ENCODE measurements at regions of chrX and their contacts with region 1.

Region 1: GRCh38 chrX:6120329-6120728 is 108.3 kb downstream of the NLGN4X start:
- DNase-seq: no peak
- ATAC-seq: no peak
- H3K4me3 ChIP-seq: no peak overlapping the region
- H3K27ac ChIP-seq: no peak overlapping the region
- H3K4me1 ChIP-seq: no peaks in the 10 kb centered on the region
- H3K27me3 ChIP-seq: no peaks in the 10 kb centered on the region
- CTCF ChIP-seq: no peak
- EP300 ChIP-seq: no peak
- POLR2A ChIP-seq: no peak
- RAD21 ChIP-seq: no peak

Region 2: GRCh38 chrX:6067600-6067999 is 52.7 kb before region 1 on chrX:
- CTCF ChIA-PET with region 1: no interaction called
- POLR2A ChIA-PET with region 1: no interaction called
- RAD21 ChIA-PET with region 1: no interaction called
- SMC1A ChIA-PET with region 1: no interaction called
- in situ Hi-C with region 1: no loop called
- intact Hi-C with region 1: loop called (anchors 2 kb)
- DNase-seq: no peak
- ATAC-seq: no peak
- H3K4me3 ChIP-seq: no peak overlapping the region
- H3K27ac ChIP-seq: no peak overlapping the region
- H3K4me1 ChIP-seq: no peaks in the 10 kb centered on the region
- H3K27me3 ChIP-seq: no peaks in the 10 kb centered on the region
- CTCF ChIP-seq: no peak
- EP300 ChIP-seq: no peak
- POLR2A ChIP-seq: no peak
- RAD21 ChIP-seq: no peak

Region 3: DNA sequence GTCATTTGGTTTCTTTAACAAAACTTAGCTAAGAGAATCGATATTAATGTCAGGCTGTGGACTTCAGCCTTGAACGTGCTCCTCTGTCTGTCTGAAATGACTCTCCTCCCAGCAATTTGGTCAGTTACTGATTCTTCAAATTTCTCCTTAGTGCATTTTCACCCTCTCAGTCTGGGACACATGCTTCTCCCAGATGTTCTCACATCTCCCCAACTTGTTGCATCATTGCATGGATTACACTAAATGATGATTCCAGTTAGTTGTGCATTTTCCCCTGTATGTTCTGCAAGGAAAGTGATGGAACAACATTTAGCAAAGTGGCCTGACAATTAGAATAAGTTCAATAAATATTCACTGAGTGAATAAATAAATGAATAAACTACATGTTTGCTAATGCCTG is 13.9 kb after region 1 on chrX:
- CTCF ChIA-PET with region 1: interaction called, 3 read pairs
- POLR2A ChIA-PET with region 1: no interaction called
- RAD21 ChIA-PET with region 1: interaction called, 5 read pairs
- SMC1A ChIA-PET with region 1: interaction called, 12 read pairs
- in situ Hi-C with region 1: no loop called
- intact Hi-C with region 1: no loop called
- DNase-seq: no peak
- ATAC-seq: no peak
- H3K4me3 ChIP-seq: no peak overlapping the region
- H3K27ac ChIP-seq: no peak overlapping the region
- H3K4me1 ChIP-seq: no peaks in the 10 kb centered on the region
- H3K27me3 ChIP-seq: no peaks in the 10 kb centered on the region
- CTCF ChIP-seq: no peak
- EP300 ChIP-seq: no peak
- POLR2A ChIP-seq: no peak
- RAD21 ChIP-seq: no peak

Region 4: DNA sequence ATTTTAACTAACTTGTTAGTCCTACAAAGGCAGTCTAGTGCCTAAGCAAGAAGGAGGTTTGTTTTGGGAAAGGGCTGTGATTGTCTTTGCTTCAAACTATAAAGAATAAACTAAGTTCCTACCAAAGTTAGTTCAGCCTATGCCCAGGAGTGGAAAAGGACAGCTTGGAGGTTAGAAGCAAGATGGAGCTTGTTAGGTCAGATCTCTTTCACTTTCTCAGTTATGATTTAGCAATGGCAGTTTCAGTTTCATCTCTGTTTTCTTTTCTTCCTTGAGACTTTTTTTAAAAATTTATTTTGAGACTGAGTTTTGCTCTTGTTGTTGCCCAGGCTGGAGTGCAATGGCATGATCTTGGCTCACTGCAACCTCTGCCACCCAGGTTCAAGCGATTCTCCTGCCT is 191.2 kb after region 1 on chrX:
- CTCF ChIA-PET with region 1: no interaction called
- POLR2A ChIA-PET with region 1: no interaction called
- RAD21 ChIA-PET with region 1: no interaction called
- SMC1A ChIA-PET with region 1: no interaction called
- in situ Hi-C with region 1: no loop called
- intact Hi-C with region 1: no loop called
- DNase-seq: no peak
- ATAC-seq: peak; percentile 71
- H3K4me3 ChIP-seq: no peak overlapping the region
- H3K27ac ChIP-seq: no peak overlapping the region
- H3K4me1 ChIP-seq: no peaks in the 10 kb centered on the region
- H3K27me3 ChIP-seq: no peaks in the 10 kb centered on the region
- CTCF ChIP-seq: no peak
- EP300 ChIP-seq: no peak
- POLR2A ChIP-seq: no peak
- RAD21 ChIP-seq: no peak

Measured in GM12878 (cell line).